Ovary (tissue), 10 donors: ENCODE measurements at regions of chr11 and their contacts with region 1.

Region 1: GRCh38 chr11:77637345-77638165 is at the start of gene CLNS1A:
- DNase-seq: peak; percentile 77 to 87 (median 82)
- H3K4me3 ChIP-seq: peak within 1 kb of the TSS; percentile 76
- H3K27ac ChIP-seq: peak within 1 kb of the TSS; percentile 53 to 65
- H3K4me1 ChIP-seq: peaks cover 14% of the 10 kb centered on the region
- H3K27me3 ChIP-seq: no peaks in the 10 kb centered on the region
- CTCF ChIP-seq: no peak
- EP300 ChIP-seq: no peak
- POLR2A ChIP-seq: peak; percentile 78
- total RNA-seq, gene CLNS1A: 117 to 147 (median 130) TPM

Region 2: DNA sequence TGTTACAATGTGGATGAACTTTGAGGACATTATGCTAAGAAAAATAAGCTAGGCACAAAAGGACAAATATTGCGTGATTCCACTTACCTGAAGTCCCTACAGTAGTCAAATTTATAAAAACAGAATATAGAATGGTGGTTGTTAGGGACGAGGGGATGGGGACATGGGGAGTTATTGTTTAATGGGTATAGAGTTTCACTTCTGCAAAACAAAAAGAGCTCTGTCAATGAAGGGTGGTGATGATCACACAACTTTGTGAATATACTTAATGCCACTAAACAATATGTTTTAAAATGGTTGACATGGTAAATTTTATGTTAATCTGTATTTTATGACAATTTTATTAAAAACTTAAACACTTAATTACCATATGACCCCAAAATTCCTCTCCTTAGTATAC is 330.8 kb after region 1 on chr11:
- intact Hi-C with region 1: loop called in 1 of 4 experiments (anchors 10 kb)
- DNase-seq: no peak
- H3K4me3 ChIP-seq: no peak overlapping the region
- H3K27ac ChIP-seq: no peak overlapping the region
- H3K4me1 ChIP-seq: no peaks in the 10 kb centered on the region
- H3K27me3 ChIP-seq: no peaks in the 10 kb centered on the region
- CTCF ChIP-seq: no peak
- EP300 ChIP-seq: no peak
- POLR2A ChIP-seq: no peak